ENCODE measurements at regions of chrX and their contacts with region 1.

Region 1: GRCh38 chrX:50691820-50692219 is 122.2 kb downstream of the SHROOM4 start:
- DNase-seq: no peak
- ATAC-seq: peak in 3 of 4 donors; percentile 53 to 75 (median 71)
- H3K4me3 ChIP-seq: no peak overlapping the region
- H3K27ac ChIP-seq: no peak overlapping the region
- H3K4me1 ChIP-seq: no peaks in the 10 kb centered on the region
- H3K27me3 ChIP-seq: peaks cover 0 to 29% (median 0%) of the 10 kb centered on the region in 9 donors
- CTCF ChIP-seq: peak; percentile 43 to 73 (median 59)
- POLR2A ChIP-seq: no peak

Region 2: GRCh38 chrX:50536955-50537354 is 154.9 kb before region 1 on chrX:
- intact Hi-C with region 1: no loop called
- DNase-seq: no peak
- ATAC-seq: no peak
- H3K4me3 ChIP-seq: no peak overlapping the region
- H3K27ac ChIP-seq: no peak overlapping the region
- H3K4me1 ChIP-seq: no peaks in the 10 kb centered on the region
- H3K27me3 ChIP-seq: peaks cover 0 to 12% (median 0%) of the 10 kb centered on the region in 9 donors
- CTCF ChIP-seq: no peak
- POLR2A ChIP-seq: no peak

Region 3: DNA sequence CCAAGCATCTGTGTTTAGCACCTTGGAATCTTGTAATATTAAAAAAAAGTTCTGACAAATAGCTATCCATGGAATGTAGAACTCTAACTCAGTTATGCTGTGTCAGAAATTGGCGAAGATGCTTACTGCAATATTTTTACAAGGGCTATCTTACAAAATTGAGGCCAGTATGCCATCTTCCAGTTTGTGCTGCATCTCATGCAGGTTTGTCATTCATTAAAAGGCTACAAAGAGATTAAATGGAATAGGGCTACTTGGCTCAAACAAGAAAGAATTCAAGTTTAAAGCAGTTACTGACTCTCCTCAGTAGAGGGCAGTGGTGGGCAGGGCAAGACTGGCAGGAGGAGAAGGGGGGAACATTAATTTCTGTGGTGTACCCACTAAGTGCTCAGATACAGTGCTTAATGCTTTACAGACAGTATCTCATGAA is 55.7 kb after region 1 on chrX:
- intact Hi-C with region 1: loop called in 2 of 10 experiments (anchors 5 to 10 kb)
- DNase-seq: peak in 3 of 5 donors; percentile 7 to 33 (median 14)
- ATAC-seq: no peak
- H3K4me3 ChIP-seq: no peak overlapping the region
- H3K27ac ChIP-seq: no peak overlapping the region
- H3K4me1 ChIP-seq: no peaks in the 10 kb centered on the region
- H3K27me3 ChIP-seq: peaks cover 0 to 24% (median 0%) of the 10 kb centered on the region in 9 donors
- CTCF ChIP-seq: peak; percentile 44 to 71 (median 60)
- POLR2A ChIP-seq: no peak

Region 4: GRCh38 chrX:50905334-50905733 is 213.5 kb after region 1 on chrX:
- intact Hi-C with region 1: loop called in 7 of 10 experiments (anchors 5 to 10 kb)
- DNase-seq: no peak
- ATAC-seq: no peak
- H3K4me3 ChIP-seq: no peak overlapping the region
- H3K27ac ChIP-seq: no peak overlapping the region
- H3K4me1 ChIP-seq: no peaks in the 10 kb centered on the region
- H3K27me3 ChIP-seq: peaks cover 0 to 17% (median 0%) of the 10 kb centered on the region in 9 donors
- CTCF ChIP-seq: peak in 4 of 12 donors; percentile 10 to 33 (median 18)
- POLR2A ChIP-seq: no peak

Region 5: GRCh38 chrX:50913520-50913919 is 221.7 kb after region 1 on chrX:
- intact Hi-C with region 1: loop called in 3 of 10 experiments (anchors 5 to 10 kb)
- DNase-seq: peak in 1 of 5 donors; percentile 8
- ATAC-seq: peak in 3 of 4 donors; percentile 73 to 89 (median 77)
- H3K4me3 ChIP-seq: no peak overlapping the region
- H3K27ac ChIP-seq: peak overlapping the region in 1 of 12 donors; percentile 54
- H3K4me1 ChIP-seq: no peaks in the 10 kb centered on the region
- H3K27me3 ChIP-seq: peaks cover 0 to 9% (median 0%) of the 10 kb centered on the region in 9 donors
- CTCF ChIP-seq: no peak
- POLR2A ChIP-seq: no peak

Region 6: GRCh38 chrX:50920132-50920531 is 228.3 kb after region 1 on chrX:
- intact Hi-C with region 1: loop called in 4 of 10 experiments (anchors 5 to 10 kb)
- DNase-seq: no peak
- ATAC-seq: no peak
- H3K4me3 ChIP-seq: no peak overlapping the region
- H3K27ac ChIP-seq: no peak overlapping the region
- H3K4me1 ChIP-seq: no peaks in the 10 kb centered on the region
- H3K27me3 ChIP-seq: peaks cover 0 to 4% (median 0%) of the 10 kb centered on the region in 9 donors
- CTCF ChIP-seq: peak; percentile 10 to 48 (median 36)
- POLR2A ChIP-seq: no peak

Region 7: GRCh38 chrX:50988649-50989048 is 296.8 kb after region 1 on chrX:
- intact Hi-C with region 1: loop called in 8 of 10 experiments (anchors 2 to 5 kb)
- DNase-seq: peak in 1 of 5 donors; percentile 23
- ATAC-seq: peak in 2 of 4 donors; percentile 51 to 59
- H3K4me3 ChIP-seq: no peak overlapping the region
- H3K27ac ChIP-seq: no peak overlapping the region
- H3K4me1 ChIP-seq: no peaks in the 10 kb centered on the region
- H3K27me3 ChIP-seq: peaks cover 0 to 41% (median 0%) of the 10 kb centered on the region in 9 donors
- CTCF ChIP-seq: peak; percentile 27 to 64 (median 52)
- POLR2A ChIP-seq: no peak

Region 8: DNA sequence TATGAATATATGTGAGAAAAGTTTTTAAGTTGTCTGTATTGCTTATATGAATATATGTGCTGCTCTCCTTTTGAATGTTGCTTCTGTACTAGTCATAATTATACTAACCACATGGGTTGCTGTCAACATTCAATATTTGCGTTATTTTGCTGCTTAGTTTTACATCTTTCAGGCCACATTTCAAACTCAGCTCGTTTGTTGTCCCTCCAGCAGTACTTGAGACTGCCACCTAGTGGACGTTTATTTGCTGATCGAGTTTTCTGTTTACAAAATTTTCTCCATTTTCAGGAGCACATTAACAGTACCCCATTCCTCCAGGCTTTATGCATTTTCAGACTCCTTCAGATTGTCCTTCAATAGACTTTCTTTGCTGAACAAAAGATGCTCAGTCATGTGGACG is 728.8 kb after region 1 on chrX:
- intact Hi-C with region 1: loop called in 2 of 10 experiments (anchors 5 kb)
- DNase-seq: no peak
- ATAC-seq: no peak
- H3K4me3 ChIP-seq: no peak overlapping the region
- H3K27ac ChIP-seq: no peak overlapping the region
- H3K4me1 ChIP-seq: no peaks in the 10 kb centered on the region
- H3K27me3 ChIP-seq: peaks cover 0 to 35% (median 0%) of the 10 kb centered on the region in 9 donors
- CTCF ChIP-seq: peak; percentile 35 to 82 (median 58)
- POLR2A ChIP-seq: no peak